Activated CD8-positive, alpha-beta memory T cell treated with anti-CD3 and anti-CD28 coated beads, Interleukin-2, amount 10 ng/mL, durations not matched to agents 7 days and 5 days (primary cell): ENCODE measurements at regions of chr2 and their contacts with region 1.

Region 1: GRCh38 chr2:108607706-108608301 is 73.5 kb downstream of the LIMS1 start:
- DNase-seq: peak; percentile 71
- ATAC-seq: no peak
- H3K4me3 Mint-ChIP-seq: no peak overlapping the region
- H3K27ac Mint-ChIP-seq: no peak overlapping the region
- H3K4me1 Mint-ChIP-seq: peaks cover 75% of the 10 kb centered on the region
- H3K27me3 Mint-ChIP-seq: no peaks in the 10 kb centered on the region

Region 2: DNA sequence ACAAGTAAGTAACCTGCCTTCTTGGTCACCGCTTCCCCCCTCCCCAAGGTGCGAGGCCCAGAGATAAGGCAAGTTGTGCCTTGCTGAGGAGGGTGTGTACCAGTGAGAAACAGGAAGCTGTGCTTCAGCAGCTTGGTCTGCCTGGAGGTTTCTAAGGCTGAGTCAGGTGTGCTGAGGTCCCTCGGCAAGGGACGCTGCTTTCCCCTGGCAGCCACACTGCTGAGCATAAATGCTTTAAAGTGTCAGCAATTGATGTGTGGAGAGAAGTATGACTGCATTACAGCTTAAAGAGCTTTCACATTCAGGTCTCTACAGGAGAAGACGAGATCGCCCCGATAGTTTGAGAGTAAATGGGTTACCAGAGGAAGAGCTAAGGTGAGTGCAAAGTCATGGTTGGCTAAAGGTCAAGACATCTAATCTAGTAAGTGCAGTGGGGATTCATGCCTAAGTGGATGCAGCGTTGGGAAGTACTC is 13.3 kb after region 1 on chr2:
- CTCF ChIA-PET with region 1: interaction called, 17 read pairs
- DNase-seq: peak; percentile 91
- ATAC-seq: peak; percentile 95
- H3K4me3 Mint-ChIP-seq: peak overlapping the region; percentile 79
- H3K27ac Mint-ChIP-seq: peak overlapping the region; percentile 90
- H3K4me1 Mint-ChIP-seq: peaks cover 75% of the 10 kb centered on the region
- H3K27me3 Mint-ChIP-seq: no peaks in the 10 kb centered on the region

Region 3: DNA sequence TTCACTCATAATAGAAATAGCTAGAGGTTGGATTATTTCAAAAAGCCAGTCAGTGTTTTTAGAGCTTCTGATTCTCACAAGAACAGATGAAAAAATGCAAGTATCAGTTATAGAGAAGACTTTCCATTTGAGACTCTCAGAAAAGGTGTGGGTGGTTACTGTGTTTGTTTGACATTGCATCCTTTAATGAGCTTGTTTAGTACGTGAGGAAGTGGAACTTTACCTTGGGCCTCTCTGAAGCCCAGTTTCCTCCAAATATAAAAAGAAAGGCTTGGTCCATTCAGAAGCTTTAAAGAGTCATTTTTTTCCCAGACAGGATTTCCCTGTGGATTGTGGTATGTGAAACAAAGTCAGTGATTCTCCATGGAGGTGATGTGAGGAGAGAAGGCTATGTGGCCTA is 21.6 kb after region 1 on chr2:
- CTCF ChIA-PET with region 1: interaction called, 171 read pairs
- DNase-seq: no peak
- ATAC-seq: peak; percentile 62
- H3K4me3 Mint-ChIP-seq: peak overlapping the region; percentile 24
- H3K27ac Mint-ChIP-seq: peak overlapping the region; percentile 74
- H3K4me1 Mint-ChIP-seq: peaks cover 79% of the 10 kb centered on the region
- H3K27me3 Mint-ChIP-seq: no peaks in the 10 kb centered on the region